ENCODE measurements at regions of chrX and their contacts with region 1.

Region 1: DNA sequence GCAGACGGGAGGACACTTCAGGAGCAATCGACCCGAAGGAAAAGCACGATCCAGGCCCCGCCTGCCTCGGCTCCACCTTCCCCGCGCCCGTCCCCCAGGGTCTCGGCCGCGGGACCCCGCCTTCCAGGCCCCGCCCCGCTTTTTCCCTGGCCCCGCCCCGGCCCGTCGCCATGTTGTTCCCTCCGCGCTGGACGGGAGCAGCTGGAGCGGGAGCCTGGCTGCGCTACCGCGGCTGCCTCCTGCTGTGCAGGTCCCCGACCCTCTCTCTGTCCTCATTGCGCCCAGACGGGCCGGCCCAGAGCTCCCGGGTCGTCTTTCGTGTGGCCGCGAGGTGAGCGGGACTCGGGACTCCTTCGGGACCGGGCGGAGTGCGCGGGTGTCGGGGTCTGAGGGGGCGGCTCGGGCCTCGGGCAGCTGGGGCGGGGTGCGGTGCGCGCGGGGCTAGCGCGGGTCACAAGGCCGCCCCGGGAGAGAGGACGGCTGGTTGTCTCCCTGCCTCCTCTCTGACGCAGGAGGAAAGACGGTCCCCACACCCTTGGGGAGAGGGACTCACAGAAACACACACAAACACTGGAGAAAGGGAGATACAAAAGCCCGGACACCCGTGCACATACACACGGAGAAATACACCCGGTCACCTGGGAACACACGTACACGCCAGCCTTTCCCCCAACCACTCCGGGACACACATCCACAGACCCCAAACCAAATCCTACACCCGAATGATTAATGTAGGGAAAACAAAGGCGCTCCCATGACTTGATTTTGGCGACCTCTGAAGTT is at the start of gene RAB9A:
- DNase-seq: peak; percentile 82
- H3K4me3 ChIP-seq: peak within 1 kb of the TSS; percentile 67 to 95 (median 90)
- H3K27ac ChIP-seq: peak within 1 kb of the TSS; percentile 96
- H3K4me1 ChIP-seq: peaks cover 50% of the 10 kb centered on the region
- H3K27me3 ChIP-seq: no peaks in the 10 kb centered on the region
- CTCF ChIP-seq: peak in 1 of 2 donors; percentile 21
- total RNA-seq, gene RAB9A: 37.2 to 42.2 TPM

Region 2: GRCh38 chrX:13658602-13659001 is 30.5 kb before region 1 on chrX:
- CTCF ChIA-PET with region 1: no interaction called
- dilution Hi-C with region 1: no loop called
- in situ Hi-C with region 1: no loop called
- intact Hi-C with region 1: loop called (anchors 1 kb)
- DNase-seq: peak; percentile 51
- H3K4me3 ChIP-seq: no peak overlapping the region
- H3K27ac ChIP-seq: peak overlapping the region; percentile 76
- H3K4me1 ChIP-seq: peaks cover 16% of the 10 kb centered on the region
- H3K27me3 ChIP-seq: no peaks in the 10 kb centered on the region
- CTCF ChIP-seq: peak; percentile 74 to 75

Region 3: GRCh38 chrX:13669246-13669737 is 19.9 kb before region 1 on chrX:
- CTCF ChIA-PET with region 1: interaction called, 3 read pairs
- dilution Hi-C with region 1: no loop called
- in situ Hi-C with region 1: no loop called
- intact Hi-C with region 1: loop called (anchors 1 kb)
- DNase-seq: peak; percentile 99
- H3K4me3 ChIP-seq: no peak overlapping the region
- H3K27ac ChIP-seq: peak overlapping the region; percentile 73
- H3K4me1 ChIP-seq: peaks cover 23% of the 10 kb centered on the region
- H3K27me3 ChIP-seq: no peaks in the 10 kb centered on the region
- CTCF ChIP-seq: no peak

Region 4: DNA sequence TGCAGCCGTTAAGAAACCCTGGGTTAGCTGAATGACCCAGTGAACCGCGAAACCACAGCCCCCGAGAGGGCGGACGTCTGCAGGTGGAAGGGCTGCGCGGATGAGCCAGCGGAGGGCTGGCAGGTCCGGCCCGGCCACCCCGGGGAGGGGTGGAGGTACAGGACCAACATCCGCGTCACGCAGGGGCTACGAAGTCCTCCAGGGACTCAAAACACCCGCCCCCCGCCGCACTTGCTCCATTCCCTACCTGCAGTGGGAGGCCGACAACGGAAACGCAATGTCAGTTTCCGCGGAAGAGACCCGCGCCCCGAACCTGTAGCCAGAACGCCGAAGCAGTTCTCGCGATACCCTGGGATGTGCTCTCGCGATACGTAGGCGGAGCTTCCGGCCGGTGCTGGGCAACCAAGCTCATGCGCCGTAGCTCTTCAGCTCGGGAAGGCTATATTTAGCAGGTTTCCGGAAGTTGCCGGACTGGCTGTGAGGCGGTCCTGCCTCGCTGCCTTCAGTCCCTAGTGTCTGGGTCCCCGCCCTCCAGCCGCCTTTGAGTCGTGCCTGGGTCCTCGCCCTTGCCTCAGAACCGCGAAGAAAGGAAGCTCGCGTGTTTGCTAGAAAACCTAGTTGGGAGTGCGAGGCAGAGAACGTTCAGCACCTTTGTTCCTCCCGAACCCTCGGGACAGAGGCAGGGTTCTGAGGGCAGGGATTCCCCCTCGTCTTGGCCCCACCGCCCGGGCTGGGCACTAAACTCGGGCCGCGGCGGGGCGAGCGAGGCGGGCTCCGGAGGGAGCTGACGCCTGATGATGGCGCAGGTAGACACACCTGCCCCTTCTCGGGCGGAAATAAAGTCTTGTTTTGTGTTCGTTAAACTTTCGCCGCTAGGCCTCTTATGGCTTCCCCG is 45.4 kb after region 1 on chrX and contains the starts of genes OFD1 and TRAPPC2:
- CTCF ChIA-PET with region 1: no interaction called
- dilution Hi-C with region 1: no loop called
- in situ Hi-C with region 1: no loop called
- intact Hi-C with region 1: loop called (anchors 2 kb)
- DNase-seq: peak; percentile 97
- H3K4me3 ChIP-seq: peak within 1 kb of the TSS; percentile 78 to 95 (median 92)
- H3K27ac ChIP-seq: peak within 1 kb of the TSS; percentile 92
- H3K4me1 ChIP-seq: peaks cover 13% of the 10 kb centered on the region
- H3K27me3 ChIP-seq: no peaks in the 10 kb centered on the region
- CTCF ChIP-seq: peak in 1 of 2 donors; percentile 8
- total RNA-seq, gene OFD1: 39.3 to 42.0 TPM
- total RNA-seq, gene TRAPPC2: 25.3 to 31.2 TPM

Region 5: GRCh38 chrX:13825178-13825762 is 136.1 kb after region 1 on chrX:
- CTCF ChIA-PET with region 1: no interaction called
- dilution Hi-C with region 1: no loop called
- in situ Hi-C with region 1: no loop called
- intact Hi-C with region 1: no loop called
- DNase-seq: no peak
- H3K4me3 ChIP-seq: no peak overlapping the region
- H3K27ac ChIP-seq: no peak overlapping the region
- H3K4me1 ChIP-seq: peaks cover 3% of the 10 kb centered on the region
- H3K27me3 ChIP-seq: no peaks in the 10 kb centered on the region
- CTCF ChIP-seq: no peak

Region 6: GRCh38 chrX:14676431-14676830 is 987.3 kb after region 1 on chrX:
- CTCF ChIA-PET with region 1: interaction called, 18 read pairs
- dilution Hi-C with region 1: no loop called
- in situ Hi-C with region 1: no loop called
- intact Hi-C with region 1: no loop called
- DNase-seq: no peak
- H3K4me3 ChIP-seq: no peak overlapping the region
- H3K27ac ChIP-seq: no peak overlapping the region
- H3K4me1 ChIP-seq: no peaks in the 10 kb centered on the region
- H3K27me3 ChIP-seq: peaks cover 3% of the 10 kb centered on the region
- CTCF ChIP-seq: no peak

Measured in mammary epithelial cell (primary cell).